ENCODE measurements at regions of chr2 and their contacts with region 1.

Region 1: GRCh38 chr2:237581751-237582746 is 8.5 kb downstream of the RAB17 start:
- DNase-seq: peak in 6 of 9 experiments; percentile 13 to 80 (median 54)
- ATAC-seq: peak; percentile 95
- H3K4me3 ChIP-seq: no peak overlapping the region
- H3K4me3 Mint-ChIP-seq: no peak overlapping the region
- H3K27ac ChIP-seq: no peak overlapping the region
- H3K27ac Mint-ChIP-seq: no peak overlapping the region
- H3K4me1 ChIP-seq: no peaks in the 10 kb centered on the region
- H3K4me1 Mint-ChIP-seq: peaks cover 3% of the 10 kb centered on the region
- H3K27me3 ChIP-seq: no peaks in the 10 kb centered on the region
- H3K27me3 Mint-ChIP-seq: no peaks in the 10 kb centered on the region
- CTCF ChIP-seq: peak; percentile 47

Region 2: GRCh38 chr2:237235383-237236095 is 346.5 kb before region 1 on chr2:
- CTCF ChIA-PET with region 1: no interaction called
- POLR2A ChIA-PET with region 1: no interaction called
- intact Hi-C with region 1: no loop called
- DNase-seq: no peak
- ATAC-seq: no peak
- H3K4me3 ChIP-seq: no peak overlapping the region
- H3K4me3 Mint-ChIP-seq: no peak overlapping the region
- H3K27ac ChIP-seq: no peak overlapping the region
- H3K27ac Mint-ChIP-seq: no peak overlapping the region
- H3K4me1 ChIP-seq: no peaks in the 10 kb centered on the region
- H3K4me1 Mint-ChIP-seq: no peaks in the 10 kb centered on the region
- H3K27me3 ChIP-seq: no peaks in the 10 kb centered on the region
- H3K27me3 Mint-ChIP-seq: peaks cover 16% of the 10 kb centered on the region
- CTCF ChIP-seq: no peak

Region 3: DNA sequence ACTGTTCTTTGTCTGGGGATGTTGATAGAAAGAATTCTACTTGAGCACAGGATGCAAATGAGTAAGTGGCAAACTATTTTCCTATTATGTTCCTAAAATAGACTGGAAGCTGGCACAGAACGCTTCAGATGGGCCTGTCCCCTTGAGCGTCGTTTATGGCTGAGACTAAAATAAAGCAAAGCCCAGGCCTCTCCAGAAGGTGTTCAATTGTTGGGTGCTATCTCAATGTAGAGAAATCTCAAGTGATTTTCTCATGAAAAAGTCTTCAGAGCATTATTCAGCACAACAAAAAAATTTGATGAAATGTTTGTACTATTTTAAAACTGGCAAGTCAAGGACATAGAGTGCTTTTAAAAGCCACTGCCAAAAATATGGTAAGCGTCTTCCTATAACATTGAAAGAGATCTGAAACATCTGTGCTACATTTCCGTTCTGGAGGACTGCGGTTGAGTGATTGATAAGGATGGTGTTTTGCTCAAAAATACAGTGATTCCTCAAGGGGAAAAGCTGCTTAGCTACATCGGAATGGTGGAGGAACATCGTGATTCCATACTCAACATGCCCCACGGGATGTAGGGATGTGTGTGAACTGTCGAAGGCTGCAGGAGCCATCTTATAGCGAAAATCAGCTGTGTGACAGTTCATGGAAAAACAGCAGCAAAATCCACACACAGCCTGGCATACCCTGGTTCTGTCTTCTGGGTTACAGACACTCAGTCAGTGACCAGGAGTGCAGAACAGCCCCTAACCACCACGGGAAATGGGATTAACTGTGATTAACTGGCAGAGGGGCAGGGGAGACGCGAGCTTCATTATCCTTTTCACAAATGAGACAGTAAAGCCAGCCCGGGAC is 34.9 kb after region 1 on chr2:
- CTCF ChIA-PET with region 1: no interaction called
- POLR2A ChIA-PET with region 1: no interaction called
- intact Hi-C with region 1: no loop called
- DNase-seq: peak in 1 of 9 experiments; percentile 32
- ATAC-seq: peak; percentile 44
- H3K4me3 ChIP-seq: no peak overlapping the region
- H3K4me3 Mint-ChIP-seq: peak overlapping the region; percentile 67
- H3K27ac ChIP-seq: no peak overlapping the region
- H3K27ac Mint-ChIP-seq: peak overlapping the region; percentile 8
- H3K4me1 ChIP-seq: peaks cover 31% of the 10 kb centered on the region
- H3K4me1 Mint-ChIP-seq: peaks cover 40% of the 10 kb centered on the region
- H3K27me3 ChIP-seq: no peaks in the 10 kb centered on the region
- H3K27me3 Mint-ChIP-seq: no peaks in the 10 kb centered on the region
- CTCF ChIP-seq: no peak

Region 4: DNA sequence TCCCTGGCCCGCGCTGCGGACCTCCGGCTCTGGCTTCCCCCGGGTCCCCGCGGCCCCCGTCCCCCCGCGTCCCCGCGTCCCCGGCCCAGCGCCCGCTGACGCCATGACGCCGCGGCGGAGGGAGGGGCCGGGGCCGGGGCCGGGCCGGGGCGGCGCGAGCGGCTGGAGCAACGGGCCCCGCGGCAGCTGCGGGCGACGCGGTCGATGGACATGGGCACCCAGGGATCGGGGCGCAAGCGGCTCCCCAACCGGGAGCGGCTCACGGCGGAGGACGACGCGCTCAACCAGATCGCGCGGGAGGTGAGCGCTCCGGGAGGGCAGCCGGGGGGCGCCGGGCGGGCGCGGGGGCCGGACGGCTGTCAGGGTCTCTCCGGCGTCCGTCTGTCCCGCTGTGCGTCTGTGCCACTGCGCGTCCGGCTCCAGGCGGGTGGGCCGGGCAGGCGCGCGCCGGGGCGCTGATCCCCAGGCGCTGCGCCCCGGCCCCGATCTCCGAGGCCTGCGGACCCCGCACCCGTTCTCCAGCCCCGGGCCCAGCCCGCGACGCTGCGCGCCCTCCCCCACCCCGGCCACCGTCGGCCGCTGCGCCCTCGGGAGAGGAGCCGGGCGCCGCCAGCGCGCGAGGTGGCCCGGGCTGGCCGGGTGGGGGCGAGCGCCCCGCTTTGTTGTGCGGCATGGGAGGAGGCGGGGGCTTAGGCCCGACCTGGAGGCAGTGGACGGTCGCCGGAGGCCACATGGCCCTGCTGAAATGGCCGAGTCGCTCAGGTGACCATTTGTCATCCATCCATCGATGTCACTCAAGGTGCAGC is 45.6 kb after region 1 on chr2 and contains the start of gene LRRFIP1:
- CTCF ChIA-PET with region 1: no interaction called
- POLR2A ChIA-PET with region 1: no interaction called
- intact Hi-C with region 1: loop called in 1 of 2 experiments (anchors 5 kb)
- DNase-seq: peak in 3 of 9 experiments; percentile 20 to 32 (median 26)
- ATAC-seq: peak; percentile 72
- H3K4me3 ChIP-seq: peak within 1 kb of the TSS; percentile 24 to 29
- H3K4me3 Mint-ChIP-seq: peak within 1 kb of the TSS; percentile 88
- H3K27ac ChIP-seq: no peak within 1 kb of the TSS
- H3K27ac Mint-ChIP-seq: peak within 1 kb of the TSS; percentile 83
- H3K4me1 ChIP-seq: peaks cover 8% of the 10 kb centered on the region
- H3K4me1 Mint-ChIP-seq: peaks cover 26% of the 10 kb centered on the region
- H3K27me3 ChIP-seq: peaks cover 0 to 6% of the 10 kb centered on the region in 2 experiments
- H3K27me3 Mint-ChIP-seq: peaks cover 20% of the 10 kb centered on the region
- CTCF ChIP-seq: no peak
- total RNA-seq, gene LRRFIP1: 127 to 128 TPM

Measured in CD8-positive, alpha-beta T cell (primary cell).